ENCODE measurements at regions of chr2 and their contacts with region 1.

Region 1: DNA sequence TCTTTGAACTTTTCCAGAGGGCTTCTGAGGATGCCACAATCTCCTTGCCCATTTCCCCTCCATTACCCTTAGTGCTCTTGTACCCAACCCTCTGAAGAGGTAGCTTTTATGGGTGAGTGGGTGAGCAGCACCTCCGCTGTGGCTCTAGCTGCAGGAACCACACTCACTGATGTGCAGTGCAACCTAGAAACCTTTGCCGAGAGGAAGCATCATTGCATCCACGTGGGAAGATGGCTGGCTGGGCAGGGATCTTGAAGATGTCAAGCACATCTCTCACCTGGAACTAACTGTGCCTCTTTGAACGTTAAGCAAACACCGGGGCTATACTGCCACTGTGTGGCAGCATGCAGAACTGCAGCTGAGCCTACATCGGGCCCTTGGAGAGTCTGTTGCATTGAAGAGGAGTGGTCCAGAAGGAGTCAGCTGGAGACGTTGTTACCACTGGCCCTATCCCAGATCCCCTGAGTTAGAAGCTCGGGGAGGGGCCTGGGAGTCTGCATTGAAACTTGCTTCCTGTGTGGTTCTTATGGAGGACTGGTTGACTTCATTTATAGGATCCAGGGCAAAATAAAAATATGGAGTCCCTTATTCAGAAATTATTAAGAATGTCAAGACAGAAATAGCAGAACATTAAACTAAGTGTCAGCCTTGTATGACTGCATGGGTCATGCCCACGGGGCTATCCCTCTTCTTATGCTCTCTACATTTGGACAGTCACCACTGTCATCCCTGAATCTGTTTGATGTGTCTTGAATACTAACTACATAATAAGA is 28.7 kb downstream of the IGFBP5 start:
- DNase-seq: peak; percentile 79
- H3K4me3 Mint-ChIP-seq: no peak overlapping the region
- H3K27ac Mint-ChIP-seq: no peak overlapping the region
- H3K4me1 Mint-ChIP-seq: peaks cover 15% of the 10 kb centered on the region
- H3K27me3 Mint-ChIP-seq: peaks cover 19% of the 10 kb centered on the region
- CTCF ChIP-seq: peak; percentile 97

Region 2: DNA sequence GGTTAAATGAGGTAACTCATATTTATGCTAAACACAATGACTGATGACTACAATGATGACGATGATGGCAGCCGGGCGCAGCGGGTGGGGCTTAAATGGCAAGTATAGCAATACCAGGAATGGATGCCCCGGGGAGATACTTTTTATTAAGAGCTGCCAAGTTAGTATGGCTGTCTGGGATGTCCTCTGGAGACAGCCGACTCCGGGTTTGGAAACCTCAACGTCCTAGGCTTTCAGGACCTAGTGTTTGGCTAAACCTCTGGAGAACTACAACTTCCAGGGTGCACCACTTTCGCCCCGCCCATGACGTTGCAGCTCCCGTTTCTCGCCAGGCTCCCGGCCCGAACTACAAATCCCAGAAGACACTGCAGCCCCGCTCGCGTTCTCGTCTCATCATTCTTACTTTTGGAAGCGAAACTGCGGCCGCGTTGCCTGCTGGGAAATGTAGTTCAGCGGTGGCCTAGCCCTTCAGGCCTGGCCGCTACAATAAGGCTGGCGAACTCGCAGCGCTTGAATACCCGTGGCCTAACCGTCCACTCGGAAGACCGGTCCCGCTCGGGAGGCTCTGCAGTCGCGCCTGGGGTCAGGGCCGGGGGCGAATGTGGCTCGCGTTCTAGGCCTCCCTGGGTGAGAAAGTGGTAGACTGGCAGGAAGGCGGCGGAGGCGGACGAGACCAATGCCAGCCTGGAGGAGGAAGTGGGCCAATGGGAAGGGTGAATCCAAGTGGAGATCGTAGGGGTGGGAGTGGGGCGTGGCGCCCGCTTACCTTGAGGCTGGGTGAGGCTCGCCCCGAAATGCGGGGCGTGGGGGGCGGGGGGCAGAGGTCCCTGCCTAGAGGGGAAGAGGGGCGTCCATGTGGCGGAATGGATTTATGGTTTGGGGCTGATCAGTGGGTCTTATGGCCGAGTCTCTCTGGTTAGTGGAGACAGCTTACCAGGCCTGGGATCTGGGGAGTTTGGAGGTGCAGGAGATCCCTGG is 254.3 kb before region 1 on chr2 and contains the start of gene SMARCAL1:
- CTCF ChIA-PET with region 1: interaction called, 3 read pairs
- POLR2A ChIA-PET with region 1: no interaction called
- intact Hi-C with region 1: loop called (anchors 10 kb)
- DNase-seq: peak; percentile 98
- H3K4me3 Mint-ChIP-seq: peak within 1 kb of the TSS; percentile 98
- H3K27ac Mint-ChIP-seq: peak within 1 kb of the TSS; percentile 91
- H3K4me1 Mint-ChIP-seq: no peaks in the 10 kb centered on the region
- H3K27me3 Mint-ChIP-seq: peaks cover 8% of the 10 kb centered on the region
- CTCF ChIP-seq: no peak
- total RNA-seq, gene SMARCAL1: 22.1 and 24.0 TPM in 2 replicates

Region 3: GRCh38 chr2:216507220-216508160 is 159.2 kb before region 1 on chr2:
- CTCF ChIA-PET with region 1: interaction called, 33 read pairs
- POLR2A ChIA-PET with region 1: interaction called, 4 read pairs
- intact Hi-C with region 1: no loop called
- DNase-seq: no peak
- H3K4me3 Mint-ChIP-seq: no peak overlapping the region
- H3K27ac Mint-ChIP-seq: peak overlapping the region; percentile 56
- H3K4me1 Mint-ChIP-seq: peaks cover 18% of the 10 kb centered on the region
- H3K27me3 Mint-ChIP-seq: no peaks in the 10 kb centered on the region
- CTCF ChIP-seq: no peak

Region 4: GRCh38 chr2:216535454-216535995 is 131.1 kb before region 1 on chr2:
- CTCF ChIA-PET with region 1: interaction called, 18 read pairs
- POLR2A ChIA-PET with region 1: interaction called, 7 read pairs
- intact Hi-C with region 1: no loop called
- DNase-seq: peak; percentile 73
- H3K4me3 Mint-ChIP-seq: no peak overlapping the region
- H3K27ac Mint-ChIP-seq: no peak overlapping the region
- H3K4me1 Mint-ChIP-seq: peaks cover 45% of the 10 kb centered on the region
- H3K27me3 Mint-ChIP-seq: no peaks in the 10 kb centered on the region
- CTCF ChIP-seq: no peak

Region 5: GRCh38 chr2:216596236-216596979 is 70.2 kb before region 1 on chr2:
- CTCF ChIA-PET with region 1: interaction called, 5 read pairs
- POLR2A ChIA-PET with region 1: interaction called, 5 read pairs
- intact Hi-C with region 1: loop called (anchors 5 kb)
- DNase-seq: peak; percentile 81
- H3K4me3 Mint-ChIP-seq: peak overlapping the region; percentile 7
- H3K27ac Mint-ChIP-seq: no peak overlapping the region
- H3K4me1 Mint-ChIP-seq: peaks cover 14% of the 10 kb centered on the region
- H3K27me3 Mint-ChIP-seq: no peaks in the 10 kb centered on the region
- CTCF ChIP-seq: no peak

Region 6: GRCh38 chr2:216651351-216651881 is 15.2 kb before region 1 on chr2:
- CTCF ChIA-PET with region 1: interaction called, 52 read pairs
- POLR2A ChIA-PET with region 1: interaction called, 3 read pairs
- intact Hi-C with region 1: no loop called
- DNase-seq: peak; percentile 75
- H3K4me3 Mint-ChIP-seq: no peak overlapping the region
- H3K27ac Mint-ChIP-seq: peak overlapping the region; percentile 35
- H3K4me1 Mint-ChIP-seq: peaks cover 22% of the 10 kb centered on the region
- H3K27me3 Mint-ChIP-seq: no peaks in the 10 kb centered on the region
- CTCF ChIP-seq: no peak

Region 7: DNA sequence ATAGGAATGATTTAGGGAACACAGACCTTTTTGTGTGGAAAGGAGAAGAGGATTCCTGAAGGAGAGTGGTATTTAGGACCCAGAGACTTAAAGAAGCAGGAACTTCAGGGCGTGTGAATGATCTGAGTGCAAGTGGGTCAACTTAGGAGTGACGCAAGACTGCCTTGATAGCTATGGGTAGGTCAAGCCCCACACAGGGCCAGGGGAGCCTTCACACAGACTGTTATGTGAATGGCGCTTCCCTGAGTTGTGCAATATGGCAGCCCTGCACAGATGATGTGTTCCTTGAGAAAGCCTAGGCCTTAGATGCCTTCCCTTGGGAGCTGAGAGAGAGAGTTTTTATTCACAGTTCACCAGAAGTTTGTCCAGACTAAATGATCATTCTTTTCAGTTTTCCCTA is 75.8 kb after region 1 on chr2:
- CTCF ChIA-PET with region 1: no interaction called
- POLR2A ChIA-PET with region 1: no interaction called
- intact Hi-C with region 1: no loop called
- DNase-seq: no peak
- H3K4me3 Mint-ChIP-seq: no peak overlapping the region
- H3K27ac Mint-ChIP-seq: no peak overlapping the region
- H3K4me1 Mint-ChIP-seq: no peaks in the 10 kb centered on the region
- H3K27me3 Mint-ChIP-seq: peaks cover 24% of the 10 kb centered on the region
- CTCF ChIP-seq: no peak